ENCODE measurements at regions of chr5 and their contacts with region 1.

Region 1: GRCh38 chr5:34915139-34915855 is at the starts of genes BRIX1 and RAD1:
- DNase-seq: peak; percentile 98
- ATAC-seq: peak; percentile 96
- H3K4me3 ChIP-seq: peak within 1 kb of the TSS; percentile 77
- H3K27ac ChIP-seq: peak within 1 kb of the TSS; percentile 95
- H3K4me1 ChIP-seq: peaks cover 5% of the 10 kb centered on the region; the same call in 1 of the 2 replicates
- H3K27me3 ChIP-seq: no peaks in the 10 kb centered on the region
- CTCF ChIP-seq: no peak; the same call in none of the 2 replicates
- POLR2A ChIP-seq: peak; percentile 62
- RAD21 ChIP-seq: peak; percentile 24; the same call in 1 of the 2 replicates
- total RNA-seq, gene BRIX1: 15.1 and 53.0 TPM in 2 replicates
- total RNA-seq, gene RAD1: 20.8 and 21.5 TPM in 2 replicates

Region 2: DNA sequence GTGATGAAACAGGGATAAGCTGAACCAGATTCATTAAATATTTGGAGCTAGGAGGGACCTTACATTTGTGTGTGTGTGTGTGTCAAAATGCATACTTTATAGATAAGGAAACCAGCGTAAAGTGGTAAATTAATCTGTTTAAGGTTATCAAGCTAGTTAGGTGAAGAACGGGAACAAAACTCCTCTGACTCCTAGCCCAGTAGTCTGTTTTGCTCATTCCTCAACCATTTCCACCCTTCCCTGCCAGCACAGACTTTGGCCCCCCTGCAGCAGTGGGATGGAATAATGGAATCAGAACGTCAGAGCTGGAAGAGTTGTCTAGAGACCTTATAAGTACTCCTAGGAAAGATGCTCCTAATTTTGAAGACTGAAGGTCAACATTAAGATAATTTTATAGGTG is 126.0 kb after region 1 on chr5:
- CTCF ChIA-PET with region 1: no interaction called
- POLR2A ChIA-PET with region 1: interaction called, 15 read pairs
- dilution Hi-C with region 1: no loop called
- in situ Hi-C with region 1: no loop called
- intact Hi-C with region 1: no loop called
- DNase-seq: peak; percentile 43
- ATAC-seq: no peak
- H3K4me3 ChIP-seq: no peak overlapping the region
- H3K27ac ChIP-seq: no peak overlapping the region
- H3K4me1 ChIP-seq: peaks cover 2% of the 10 kb centered on the region
- H3K27me3 ChIP-seq: no peaks in the 10 kb centered on the region; the same call in 1 of the 2 replicates
- CTCF ChIP-seq: no peak
- POLR2A ChIP-seq: no peak
- RAD21 ChIP-seq: no peak

Measured in IMR-90 (cell line).